Prostate gland (tissue), 2 donors: ENCODE measurements at regions of chr7 and their contacts with region 1.

Region 1: DNA sequence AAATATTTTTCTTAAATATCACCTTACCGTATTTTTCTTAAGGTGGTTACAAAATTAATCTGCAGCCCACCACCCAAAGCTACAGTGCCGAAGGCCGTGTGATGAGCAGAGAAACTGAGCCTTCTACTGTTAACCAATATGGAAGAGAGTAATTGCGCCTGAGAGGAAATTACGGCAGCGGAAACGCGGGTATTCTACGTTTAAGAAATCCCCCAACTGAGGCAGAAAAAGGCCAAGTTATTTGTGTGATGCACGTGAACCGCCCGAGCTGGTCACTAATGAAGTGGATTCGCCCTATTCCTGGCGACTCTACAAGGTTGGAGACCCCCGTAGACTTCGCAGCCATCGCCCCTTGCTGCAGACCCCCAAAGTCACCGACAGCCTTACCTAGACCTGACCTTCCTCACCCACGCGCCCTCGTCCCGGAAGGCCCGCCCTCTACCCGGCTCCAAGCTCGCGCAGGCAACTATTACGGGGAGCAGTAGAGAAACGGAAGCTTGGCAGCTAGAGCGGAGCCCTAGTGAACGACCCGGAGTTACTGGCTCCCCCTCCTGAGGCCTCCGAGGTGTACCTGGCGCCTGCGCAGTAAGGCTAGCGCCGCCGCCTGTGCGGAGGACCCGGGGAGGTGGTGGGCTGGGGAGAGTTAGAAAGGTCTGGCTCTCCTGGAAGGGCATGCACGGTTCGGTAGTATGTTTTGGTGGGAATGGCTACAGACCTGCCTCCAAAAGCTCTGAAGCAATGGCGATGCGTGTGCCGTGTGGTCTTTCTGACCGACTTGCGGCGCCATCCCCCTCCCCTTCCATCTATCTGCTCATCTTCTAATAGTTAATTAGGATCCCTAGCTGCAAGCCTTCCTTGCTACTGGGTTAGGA is at the start of gene MRPS33:
- DNase-seq: peak; percentile 95
- H3K4me3 ChIP-seq: peak within 1 kb of the TSS; percentile 45 to 54
- H3K27ac ChIP-seq: peak within 1 kb of the TSS; percentile 74 to 84
- H3K4me1 ChIP-seq: no peaks in the 10 kb centered on the region
- H3K27me3 ChIP-seq: no peaks in the 10 kb centered on the region
- CTCF ChIP-seq: peak in 3 of 4 experiments; percentile 46 to 65 (median 64)
- POLR2A ChIP-seq: peak; percentile 18
- total RNA-seq, gene MRPS33: 30.0 to 43.0 TPM

Region 2: DNA sequence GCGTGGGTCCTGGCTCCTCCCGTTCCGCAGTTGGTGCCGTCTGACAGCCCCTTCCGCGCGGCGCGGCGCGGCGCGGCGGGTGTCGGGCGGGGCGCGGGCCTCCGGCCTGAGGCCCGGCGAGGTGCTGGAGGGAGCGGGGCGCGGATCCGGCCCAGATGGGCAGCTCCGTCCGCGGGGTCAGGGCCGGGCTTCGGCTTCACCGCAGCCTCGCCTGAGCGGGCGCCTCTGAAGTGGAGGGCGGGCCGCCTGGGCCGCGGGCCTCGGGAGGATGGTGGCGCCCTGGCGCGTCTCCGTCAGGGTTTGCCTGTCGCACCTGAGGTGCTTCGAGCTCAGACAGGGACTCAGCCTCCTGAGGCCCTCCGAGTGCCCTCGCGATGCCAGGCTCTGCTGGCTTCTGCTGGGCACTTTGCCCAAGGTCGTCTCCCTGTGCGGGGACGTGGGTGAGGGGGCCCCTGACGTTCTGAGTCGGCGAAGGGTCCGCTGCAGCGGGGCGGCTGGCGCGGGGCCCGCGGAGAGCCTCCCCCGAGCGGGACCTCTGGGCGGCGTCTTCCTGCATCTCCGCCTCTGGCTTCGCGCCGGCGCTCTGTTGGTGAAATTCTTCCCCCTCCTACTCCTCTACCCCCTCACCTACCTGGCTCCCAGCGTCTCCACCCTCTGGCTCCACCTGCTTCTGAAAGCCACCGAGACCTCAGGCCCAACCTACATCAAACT is 341.5 kb before region 1 on chr7:
- intact Hi-C with region 1: loop called (anchors 10 kb)
- DNase-seq: peak; percentile 73
- H3K4me3 ChIP-seq: peak overlapping the region; percentile 72 to 80
- H3K27ac ChIP-seq: peak overlapping the region; percentile 86 to 93
- H3K4me1 ChIP-seq: peaks cover 3% of the 10 kb centered on the region
- H3K27me3 ChIP-seq: no peaks in the 10 kb centered on the region
- CTCF ChIP-seq: peak in 1 of 4 experiments; percentile 19
- POLR2A ChIP-seq: peak; percentile 82

Region 3: GRCh38 chr7:140924019-140924820 is 90.5 kb before region 1 on chr7:
- intact Hi-C with region 1: loop called (anchors 2 kb)
- DNase-seq: peak; percentile 62
- H3K4me3 ChIP-seq: peak overlapping the region; percentile 80 to 99
- H3K27ac ChIP-seq: peak overlapping the region; percentile 97 to 99
- H3K4me1 ChIP-seq: no peaks in the 10 kb centered on the region
- H3K27me3 ChIP-seq: no peaks in the 10 kb centered on the region
- CTCF ChIP-seq: peak in 2 of 4 experiments; percentile 46 to 58
- POLR2A ChIP-seq: peak; percentile 25

Region 4: DNA sequence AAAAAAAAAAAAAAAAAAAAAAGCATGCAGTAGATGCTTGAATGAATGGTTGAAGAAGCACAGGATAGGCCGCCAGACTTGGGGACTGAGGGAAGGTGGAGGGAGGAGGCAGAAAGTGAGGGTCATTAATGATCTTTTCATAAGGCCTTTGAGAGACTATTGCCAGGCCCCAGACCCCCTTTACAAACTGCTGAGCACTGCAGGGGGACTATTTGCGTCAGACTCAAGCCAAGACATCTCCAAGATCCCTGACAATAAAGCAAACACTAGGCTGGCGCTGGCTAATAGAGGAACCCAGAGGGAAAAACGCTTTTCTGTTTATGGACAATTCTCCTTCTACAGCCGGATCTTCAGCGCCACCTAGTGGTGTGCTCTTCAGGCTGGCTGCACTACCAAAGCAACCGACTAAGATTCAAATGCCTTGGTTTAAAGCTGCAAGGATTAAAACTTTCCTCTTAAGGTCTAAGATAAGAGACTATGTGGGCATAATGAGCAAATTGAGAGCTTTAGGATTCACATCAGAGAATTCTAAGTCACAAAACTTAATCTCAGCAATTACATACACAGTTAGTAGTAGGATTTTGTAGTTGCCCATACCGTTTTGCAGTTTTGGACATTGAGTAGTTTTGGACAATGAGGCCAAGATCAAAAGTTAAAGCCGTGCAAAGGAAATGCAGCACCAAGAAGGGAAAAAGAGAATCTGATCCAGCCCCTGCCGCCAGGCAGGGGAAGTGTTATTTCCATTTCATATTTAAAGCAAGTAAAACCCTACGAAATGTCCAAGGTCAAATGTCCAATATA is 518.6 kb after region 1 on chr7:
- intact Hi-C with region 1: loop called (anchors 5 kb)
- DNase-seq: peak; percentile 65
- H3K4me3 ChIP-seq: no peak overlapping the region
- H3K27ac ChIP-seq: no peak overlapping the region
- H3K4me1 ChIP-seq: no peaks in the 10 kb centered on the region
- H3K27me3 ChIP-seq: no peaks in the 10 kb centered on the region
- CTCF ChIP-seq: peak; percentile 82 to 95 (median 86)
- POLR2A ChIP-seq: no peak

Region 5: GRCh38 chr7:141649865-141650634 is 635.3 kb after region 1 on chr7:
- intact Hi-C with region 1: loop called (anchors 2 kb)
- DNase-seq: peak; percentile 80
- H3K4me3 ChIP-seq: no peak overlapping the region
- H3K27ac ChIP-seq: peak overlapping the region; percentile 42 to 43
- H3K4me1 ChIP-seq: peaks cover 5% of the 10 kb centered on the region
- H3K27me3 ChIP-seq: no peaks in the 10 kb centered on the region
- CTCF ChIP-seq: peak; percentile 37 to 88 (median 63)
- POLR2A ChIP-seq: no peak

Region 6: GRCh38 chr7:141701489-141702046 is 686.8 kb after region 1 on chr7:
- intact Hi-C with region 1: no loop called
- DNase-seq: peak; percentile 18
- H3K4me3 ChIP-seq: peak overlapping the region; percentile 86 to 90
- H3K27ac ChIP-seq: peak overlapping the region; percentile 82 to 88
- H3K4me1 ChIP-seq: no peaks in the 10 kb centered on the region
- H3K27me3 ChIP-seq: no peaks in the 10 kb centered on the region
- CTCF ChIP-seq: no peak
- POLR2A ChIP-seq: no peak